Right cardiac atrium (tissue), 5 donors: ENCODE measurements at regions of chr7 and their contacts with region 1.

Region 1: GRCh38 chr7:32204361-32205018 is 134.3 kb upstream of the PDE1C start:
- DNase-seq: peak; percentile 73 to 82 (median 81)
- ATAC-seq: peak; percentile 92 to 95
- H3K4me3 ChIP-seq: peak overlapping the region; percentile 64
- H3K27ac ChIP-seq: no peak overlapping the region
- H3K4me1 ChIP-seq: no peaks in the 10 kb centered on the region
- H3K27me3 ChIP-seq: no peaks in the 10 kb centered on the region

Region 2: DNA sequence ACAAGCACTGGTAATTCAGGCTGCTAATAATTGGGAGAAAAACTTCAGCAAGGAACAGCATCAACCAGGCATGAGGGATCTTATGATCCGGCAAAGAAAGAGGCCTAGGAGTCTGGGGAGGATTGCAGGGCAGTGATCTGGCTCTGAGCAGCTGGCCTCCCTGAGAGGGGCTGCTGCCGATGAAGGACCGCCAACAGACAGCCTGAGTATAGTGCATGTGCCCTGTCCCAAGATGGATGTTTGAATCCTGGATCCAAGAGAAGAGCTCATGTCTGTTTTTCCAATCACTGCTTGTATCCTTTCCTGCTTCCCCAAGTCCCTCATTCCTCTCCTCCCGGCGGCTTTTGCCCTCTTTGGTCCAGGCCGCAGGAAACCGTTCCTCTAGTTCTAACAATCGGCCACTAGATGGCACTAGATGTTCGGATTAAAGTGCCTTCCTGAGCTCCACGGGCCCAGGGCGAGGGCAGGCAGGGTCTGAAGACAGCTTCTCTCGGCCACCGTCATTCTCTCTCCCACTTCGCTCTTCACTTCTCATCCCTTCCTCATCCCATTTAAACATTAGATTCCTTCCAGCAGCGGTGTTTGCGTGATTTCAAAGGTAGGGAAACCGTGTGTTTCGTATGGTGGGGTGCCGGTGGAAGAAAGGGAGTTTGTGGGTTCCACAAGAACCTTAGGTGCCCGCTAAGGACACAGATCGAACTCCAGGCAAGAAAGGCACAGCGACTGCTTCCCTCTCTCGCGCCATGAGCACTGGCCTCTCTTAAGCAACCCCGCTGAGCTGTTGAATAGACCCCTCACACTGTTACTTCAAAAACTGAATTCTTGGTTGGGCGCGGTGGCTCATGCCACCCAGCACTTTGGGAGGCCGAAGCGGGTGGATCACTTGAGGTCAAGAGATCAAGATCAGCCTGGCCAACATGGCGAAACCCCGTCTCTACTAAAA is 1070.0 kb before region 1 on chr7:
- intact Hi-C with region 1: loop called in 1 of 4 experiments (anchors 10 kb)
- DNase-seq: peak; percentile 76 to 90 (median 85)
- ATAC-seq: peak; percentile 97
- H3K4me3 ChIP-seq: no peak overlapping the region
- H3K27ac ChIP-seq: no peak overlapping the region
- H3K4me1 ChIP-seq: no peaks in the 10 kb centered on the region
- H3K27me3 ChIP-seq: no peaks in the 10 kb centered on the region

Region 3: DNA sequence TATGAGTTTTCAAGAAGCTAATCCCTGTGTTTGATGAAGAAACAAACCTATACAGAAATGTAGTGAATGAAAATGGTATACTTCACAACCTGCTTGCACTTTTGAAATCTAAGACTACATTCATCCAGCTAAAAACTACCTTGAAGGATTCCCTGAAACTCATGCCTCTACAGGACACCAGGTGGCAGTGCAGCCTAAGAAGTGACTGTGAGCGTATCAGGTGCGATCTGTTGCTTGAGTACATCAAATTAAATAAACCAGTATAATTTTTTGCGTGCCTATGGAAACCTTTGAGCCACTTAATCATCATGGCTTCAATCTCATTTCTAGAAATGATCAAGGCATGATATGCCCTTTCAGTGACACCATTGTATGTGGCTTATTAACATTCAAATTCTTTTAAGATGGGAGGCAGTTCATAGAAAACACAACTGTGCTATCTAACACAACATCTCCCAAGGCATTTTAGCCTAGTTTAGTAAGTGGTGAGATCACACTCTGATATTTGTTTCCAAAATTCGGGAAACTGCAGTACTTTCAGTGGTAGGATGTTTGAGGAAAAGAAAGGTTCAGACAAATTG is 460.1 kb before region 1 on chr7:
- intact Hi-C with region 1: loop called (anchors 2 to 5 kb)
- DNase-seq: peak; percentile 49 to 82 (median 67)
- ATAC-seq: peak; percentile 57 to 67
- H3K4me3 ChIP-seq: no peak overlapping the region
- H3K27ac ChIP-seq: no peak overlapping the region
- H3K4me1 ChIP-seq: no peaks in the 10 kb centered on the region
- H3K27me3 ChIP-seq: no peaks in the 10 kb centered on the region

Region 4: DNA sequence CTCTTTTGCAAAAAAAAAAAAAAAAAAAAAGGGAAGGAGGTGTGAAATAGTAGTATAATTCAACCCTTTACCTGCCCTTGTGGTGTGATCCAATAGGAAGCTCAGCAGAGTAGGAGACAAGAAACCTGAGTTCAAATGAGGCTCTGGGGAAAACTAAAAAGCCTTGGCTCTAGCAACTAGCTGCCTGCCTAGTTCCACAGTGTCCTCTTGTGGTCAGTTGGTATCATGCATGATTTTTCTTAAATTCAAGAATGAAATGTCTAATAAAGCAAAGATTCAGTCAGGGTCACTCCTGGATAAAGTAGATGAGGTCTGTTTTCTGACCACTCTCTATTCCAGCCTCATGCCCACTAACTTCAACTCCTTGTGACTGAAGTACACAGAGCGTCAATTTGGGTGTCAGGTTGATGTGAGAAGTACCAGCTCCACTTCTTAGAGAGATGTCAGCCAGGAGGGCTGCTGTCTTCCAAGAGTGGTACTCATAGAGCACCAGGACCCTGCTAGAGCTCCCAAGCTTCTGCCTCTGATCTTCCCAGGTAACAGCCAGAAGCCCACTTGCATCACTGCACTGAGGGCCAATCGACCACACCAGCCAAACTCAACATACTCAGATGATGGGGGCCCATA is 275.2 kb after region 1 on chr7:
- intact Hi-C with region 1: loop called in 1 of 4 experiments (anchors 5 kb)
- DNase-seq: no peak
- ATAC-seq: peak; percentile 22 to 45
- H3K4me3 ChIP-seq: no peak overlapping the region
- H3K27ac ChIP-seq: no peak overlapping the region
- H3K4me1 ChIP-seq: no peaks in the 10 kb centered on the region
- H3K27me3 ChIP-seq: no peaks in the 10 kb centered on the region